B cell (primary cell): ENCODE measurements at regions of chr11 and their contacts with region 1.

Region 1: GRCh38 chr11:20127671-20128527 is 32.4 kb downstream of the DBX1 start:
- DNase-seq: peak; percentile 66
- ATAC-seq: peak; percentile 68
- H3K4me3 ChIP-seq: no peak overlapping the region
- H3K4me3 Mint-ChIP-seq: no peak overlapping the region
- H3K27ac ChIP-seq: no peak overlapping the region
- H3K27ac Mint-ChIP-seq: no peak overlapping the region
- H3K4me1 ChIP-seq: peaks cover 10% of the 10 kb centered on the region in 2 donors
- H3K4me1 Mint-ChIP-seq: peaks cover 10% of the 10 kb centered on the region
- H3K27me3 ChIP-seq: peaks cover 0 to 16% (median 7%) of the 10 kb centered on the region in 4 experiments
- H3K27me3 Mint-ChIP-seq: peaks cover 24% of the 10 kb centered on the region
- CTCF ChIP-seq: peak; percentile 88

Region 2: GRCh38 chr11:19561011-19561410 is 566.9 kb before region 1 on chr11:
- CTCF ChIA-PET with region 1: interaction called, 5 read pairs
- POLR2A ChIA-PET with region 1: no interaction called
- intact Hi-C with region 1: loop called (anchors 5 kb)
- DNase-seq: no peak
- ATAC-seq: no peak
- H3K4me3 ChIP-seq: no peak overlapping the region
- H3K4me3 Mint-ChIP-seq: no peak overlapping the region
- H3K27ac ChIP-seq: no peak overlapping the region
- H3K27ac Mint-ChIP-seq: no peak overlapping the region
- H3K4me1 ChIP-seq: no peaks in the 10 kb centered on the region
- H3K4me1 Mint-ChIP-seq: peaks cover 1% of the 10 kb centered on the region
- H3K27me3 ChIP-seq: peaks cover 0 to 23% (median 7%) of the 10 kb centered on the region in 4 experiments
- H3K27me3 Mint-ChIP-seq: peaks cover 9% of the 10 kb centered on the region
- CTCF ChIP-seq: no peak

Region 3: GRCh38 chr11:19951558-19952115 is 176.3 kb before region 1 on chr11:
- CTCF ChIA-PET with region 1: interaction called, 18 read pairs
- POLR2A ChIA-PET with region 1: no interaction called
- intact Hi-C with region 1: loop called (anchors 1 kb)
- DNase-seq: peak; percentile 66
- ATAC-seq: peak; percentile 47
- H3K4me3 ChIP-seq: peak overlapping the region; percentile 27 to 61 (median 46)
- H3K4me3 Mint-ChIP-seq: peak overlapping the region; percentile 77
- H3K27ac ChIP-seq: no peak overlapping the region
- H3K27ac Mint-ChIP-seq: no peak overlapping the region
- H3K4me1 ChIP-seq: peaks cover 4% of the 10 kb centered on the region in 2 donors
- H3K4me1 Mint-ChIP-seq: peaks cover 8% of the 10 kb centered on the region
- H3K27me3 ChIP-seq: peaks cover 0 to 4% (median 2%) of the 10 kb centered on the region in 4 experiments
- H3K27me3 Mint-ChIP-seq: peaks cover 35% of the 10 kb centered on the region
- CTCF ChIP-seq: peak; percentile 79

Region 4: DNA sequence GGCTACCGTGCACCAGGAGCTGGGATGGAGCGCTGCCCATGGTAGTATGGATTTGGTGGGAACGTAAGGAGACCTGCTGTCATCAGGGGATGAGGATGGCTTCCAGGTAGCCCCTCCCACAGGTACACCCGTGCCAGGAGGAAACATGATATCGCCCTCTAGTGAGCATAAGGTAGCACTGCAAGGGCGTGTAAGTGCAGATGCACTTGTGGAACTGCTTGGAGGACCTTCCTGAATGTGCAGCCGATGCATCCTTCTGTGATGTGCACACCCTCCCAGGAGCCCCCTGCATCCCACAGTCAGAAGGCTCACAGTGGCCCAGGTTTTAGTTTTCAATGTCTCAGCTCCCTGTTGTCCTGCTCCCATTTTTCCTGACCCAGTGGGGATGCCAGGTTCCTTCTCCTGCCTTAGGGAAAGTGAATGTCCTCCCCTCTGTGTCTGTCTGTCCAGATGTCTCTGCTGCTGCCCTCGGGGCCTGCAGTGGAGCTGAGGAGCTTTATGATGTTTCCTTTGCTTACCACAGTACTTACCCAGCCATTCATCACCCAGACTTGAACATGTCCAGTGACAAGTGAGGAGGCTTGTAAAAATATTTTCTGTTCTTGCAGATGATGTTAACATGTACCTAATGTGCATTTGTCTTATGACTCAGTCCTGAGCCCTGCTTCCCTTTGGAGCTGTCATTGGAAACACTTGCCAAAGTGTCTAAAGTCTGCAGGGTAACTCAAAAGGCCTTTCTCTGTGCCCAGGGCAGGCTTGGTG is 16.8 kb before region 1 on chr11:
- CTCF ChIA-PET with region 1: interaction called, 51 read pairs
- POLR2A ChIA-PET with region 1: no interaction called
- intact Hi-C with region 1: no loop called
- DNase-seq: peak; percentile 61
- ATAC-seq: peak; percentile 75
- H3K4me3 ChIP-seq: no peak overlapping the region
- H3K4me3 Mint-ChIP-seq: no peak overlapping the region
- H3K27ac ChIP-seq: no peak overlapping the region
- H3K27ac Mint-ChIP-seq: no peak overlapping the region
- H3K4me1 ChIP-seq: peaks cover 0 to 4% of the 10 kb centered on the region in 2 donors
- H3K4me1 Mint-ChIP-seq: peaks cover 3% of the 10 kb centered on the region
- H3K27me3 ChIP-seq: no peaks in the 10 kb centered on the region
- H3K27me3 Mint-ChIP-seq: peaks cover 12% of the 10 kb centered on the region
- CTCF ChIP-seq: peak; percentile 76

Region 5: GRCh38 chr11:20355221-20356219 is 227.6 kb after region 1 on chr11:
- CTCF ChIA-PET with region 1: interaction called, 63 read pairs
- POLR2A ChIA-PET with region 1: no interaction called
- intact Hi-C with region 1: no loop called
- DNase-seq: peak; percentile 49
- ATAC-seq: peak; percentile 58
- H3K4me3 ChIP-seq: no peak overlapping the region
- H3K4me3 Mint-ChIP-seq: no peak overlapping the region
- H3K27ac ChIP-seq: no peak overlapping the region
- H3K27ac Mint-ChIP-seq: no peak overlapping the region
- H3K4me1 ChIP-seq: peaks cover 5 to 6% of the 10 kb centered on the region in 2 donors
- H3K4me1 Mint-ChIP-seq: peaks cover 7% of the 10 kb centered on the region
- H3K27me3 ChIP-seq: peaks cover 0 to 5% (median 4%) of the 10 kb centered on the region in 4 experiments
- H3K27me3 Mint-ChIP-seq: peaks cover 13% of the 10 kb centered on the region
- CTCF ChIP-seq: peak; percentile 63

Region 6: DNA sequence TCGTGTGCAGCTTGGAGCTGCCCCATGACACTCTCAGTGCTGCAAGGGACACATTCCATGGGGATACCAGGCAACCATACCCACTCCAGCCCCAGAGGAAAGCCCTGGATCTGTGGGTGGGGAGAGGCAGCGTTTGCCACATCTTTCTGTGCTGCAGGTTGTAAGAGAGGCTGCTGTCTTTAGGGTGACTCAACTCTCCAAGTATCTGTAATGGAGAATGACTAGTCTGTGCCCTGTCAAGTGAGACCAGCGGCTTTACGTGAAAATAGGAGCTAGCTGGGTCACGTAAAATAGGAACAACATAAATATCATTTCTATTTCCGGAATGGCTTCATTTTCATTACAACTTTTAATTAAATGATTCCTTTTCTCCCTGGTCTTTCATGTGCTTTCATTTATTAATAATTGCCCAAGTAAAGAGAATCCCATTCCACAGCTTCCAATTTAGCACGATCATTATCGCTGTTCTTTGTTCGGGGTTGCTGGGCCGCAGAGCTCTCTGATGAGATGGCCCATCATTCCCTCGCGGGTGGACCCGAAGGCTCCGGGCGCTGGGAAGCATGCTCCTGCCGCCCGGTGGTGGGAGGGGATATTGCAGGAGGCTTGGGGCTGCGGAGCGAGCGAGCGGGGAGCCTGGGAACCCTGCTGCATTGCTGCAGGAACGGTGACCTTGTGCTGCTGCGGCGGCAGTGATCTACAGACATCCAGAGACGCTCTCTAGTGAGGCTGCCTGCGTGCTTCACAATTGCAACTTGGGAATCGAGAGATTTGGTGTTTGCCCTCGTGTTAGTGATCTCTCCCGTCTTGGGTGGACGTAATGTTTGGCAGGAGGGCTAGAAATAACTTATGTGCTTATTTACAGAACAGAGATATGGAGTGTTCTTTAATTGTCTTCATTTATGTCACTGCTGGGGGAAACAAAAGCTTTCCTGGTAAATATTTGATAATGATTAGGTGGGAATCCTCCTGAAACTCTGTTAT is 482.1 kb after region 1 on chr11:
- CTCF ChIA-PET with region 1: interaction called, 11 read pairs
- POLR2A ChIA-PET with region 1: no interaction called
- intact Hi-C with region 1: no loop called
- DNase-seq: peak; percentile 43
- ATAC-seq: no peak
- H3K4me3 ChIP-seq: peak overlapping the region in 2 of 5 experiments; percentile 19 to 20
- H3K4me3 Mint-ChIP-seq: peak overlapping the region; percentile 45
- H3K27ac ChIP-seq: no peak overlapping the region
- H3K27ac Mint-ChIP-seq: no peak overlapping the region
- H3K4me1 ChIP-seq: peaks cover 5 to 6% of the 10 kb centered on the region in 2 donors
- H3K4me1 Mint-ChIP-seq: peaks cover 6% of the 10 kb centered on the region
- H3K27me3 ChIP-seq: peaks cover 0 to 51% (median 20%) of the 10 kb centered on the region in 4 experiments
- H3K27me3 Mint-ChIP-seq: peaks cover 68% of the 10 kb centered on the region
- CTCF ChIP-seq: peak; percentile 77